Ascending aorta (tissue), 2 donors: ENCODE measurements at regions of chr7 and their contacts with region 1.

Region 1: GRCh38 chr7:30983042-30983913 is 19.5 kb downstream of the GHRHR start:
- DNase-seq: peak in 1 of 2 donors; percentile 89
- H3K4me3 ChIP-seq: peak overlapping the region; percentile 24 to 62
- H3K27ac ChIP-seq: peak overlapping the region; percentile 57 to 65
- H3K4me1 ChIP-seq: peaks cover 0 to 18% of the 10 kb centered on the region in 2 donors
- H3K27me3 ChIP-seq: no peaks in the 10 kb centered on the region
- CTCF ChIP-seq: peak; percentile 80 to 96 (median 94)

Region 2: DNA sequence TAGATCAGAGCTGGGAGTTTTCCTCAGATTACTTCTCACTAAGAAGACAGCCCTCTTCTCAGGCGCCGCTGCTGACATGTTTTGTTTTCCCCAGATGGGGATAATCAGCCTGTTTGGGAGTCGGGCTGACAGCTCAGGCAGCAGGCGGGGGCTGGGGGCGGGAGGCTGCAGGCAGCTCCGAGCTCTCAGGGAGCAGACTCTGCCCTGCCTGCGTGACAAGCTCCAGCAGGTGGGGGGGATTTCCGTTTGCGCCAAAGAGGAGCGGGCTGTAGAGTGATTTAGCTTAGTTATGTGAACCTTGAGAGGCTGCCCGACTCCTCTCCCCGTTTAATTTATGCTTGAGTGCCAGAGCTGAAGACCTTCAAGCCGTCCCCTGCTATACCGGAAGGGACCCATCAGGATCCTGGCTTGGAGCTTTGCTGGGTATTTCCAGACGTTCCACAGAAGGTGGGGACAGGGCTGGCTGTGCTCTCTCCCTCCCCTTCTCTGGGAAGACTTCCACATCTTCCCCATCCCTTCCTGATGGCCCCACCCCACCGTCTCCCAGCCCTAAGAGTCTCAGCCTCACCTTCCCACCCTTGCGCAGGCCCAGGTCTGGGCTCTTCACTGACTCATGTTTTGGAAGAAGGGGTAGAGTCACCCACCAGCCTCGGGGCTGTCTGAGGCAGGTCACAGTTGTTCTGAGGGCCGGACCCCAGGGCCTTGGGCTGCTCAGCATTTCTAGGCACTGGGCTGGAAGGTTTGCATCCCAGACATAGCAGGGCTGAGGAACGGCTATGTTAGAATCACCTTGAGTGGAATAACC is 44.1 kb after region 1 on chr7:
- intact Hi-C with region 1: no loop called
- DNase-seq: no peak
- H3K4me3 ChIP-seq: no peak overlapping the region
- H3K27ac ChIP-seq: no peak overlapping the region
- H3K4me1 ChIP-seq: no peaks in the 10 kb centered on the region
- H3K27me3 ChIP-seq: no peaks in the 10 kb centered on the region
- CTCF ChIP-seq: no peak

Region 3: GRCh38 chr7:31058122-31058521 is 74.8 kb after region 1 on chr7:
- intact Hi-C with region 1: no loop called
- DNase-seq: no peak
- H3K4me3 ChIP-seq: no peak overlapping the region
- H3K27ac ChIP-seq: no peak overlapping the region
- H3K4me1 ChIP-seq: no peaks in the 10 kb centered on the region
- H3K27me3 ChIP-seq: no peaks in the 10 kb centered on the region
- CTCF ChIP-seq: no peak

Region 4: DNA sequence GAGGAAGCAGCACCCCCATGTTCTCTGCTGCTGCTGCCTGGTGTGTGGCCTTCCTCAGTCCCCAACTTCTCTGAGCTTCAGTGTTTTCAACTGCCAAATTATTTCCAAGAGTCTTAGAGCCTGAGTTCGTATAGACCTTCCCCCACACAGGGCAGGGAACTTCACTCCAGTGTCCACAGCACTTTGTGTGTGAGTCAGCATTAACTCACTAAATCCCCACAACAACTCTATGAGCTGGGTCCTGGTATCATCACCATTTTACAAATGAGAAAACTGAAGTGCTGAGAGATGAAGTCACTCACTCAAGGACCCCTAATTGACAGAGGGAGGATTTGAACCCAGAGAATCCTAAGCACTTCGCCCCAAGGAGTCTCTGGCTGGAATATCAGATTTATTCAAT is 117.2 kb after region 1 on chr7:
- intact Hi-C with region 1: no loop called
- DNase-seq: peak in 1 of 2 donors; percentile 4
- H3K4me3 ChIP-seq: no peak overlapping the region
- H3K27ac ChIP-seq: no peak overlapping the region
- H3K4me1 ChIP-seq: no peaks in the 10 kb centered on the region
- H3K27me3 ChIP-seq: no peaks in the 10 kb centered on the region
- CTCF ChIP-seq: no peak

Region 5: GRCh38 chr7:31122649-31123058 is 139.4 kb after region 1 on chr7:
- intact Hi-C with region 1: loop called (anchors 1 kb)
- DNase-seq: peak in 1 of 2 donors; percentile 79
- H3K4me3 ChIP-seq: no peak overlapping the region
- H3K27ac ChIP-seq: no peak overlapping the region
- H3K4me1 ChIP-seq: no peaks in the 10 kb centered on the region
- H3K27me3 ChIP-seq: no peaks in the 10 kb centered on the region
- CTCF ChIP-seq: peak; percentile 59 to 81 (median 67)